Naive thymus-derived CD4-positive, alpha-beta T cell (primary cell): ENCODE measurements at regions of chr4 and their contacts with region 1.

Region 1: GRCh38 chr4:55948726-55949474 is at the start of gene CEP135:
- DNase-seq: peak; percentile 84 to 94 (median 90)
- ATAC-seq: peak; percentile 88
- H3K4me3 ChIP-seq: peak within 1 kb of the TSS; percentile 88
- H3K4me3 Mint-ChIP-seq: peak within 1 kb of the TSS; percentile 86 to 96 (median 92)
- H3K27ac ChIP-seq: peak within 1 kb of the TSS; percentile 71
- H3K27ac Mint-ChIP-seq: peak within 1 kb of the TSS; percentile 90 to 98 (median 94)
- H3K4me1 ChIP-seq: peaks cover 14 to 15% of the 10 kb centered on the region in 2 donors
- H3K4me1 Mint-ChIP-seq: peaks cover 30 to 69% (median 51%) of the 10 kb centered on the region in 7 donors
- H3K27me3 ChIP-seq: no peaks in the 10 kb centered on the region
- H3K27me3 Mint-ChIP-seq: no peaks in the 10 kb centered on the region
- total RNA-seq, gene CEP135: 20.6 to 38.8 (median 24.6) TPM

Region 2: DNA sequence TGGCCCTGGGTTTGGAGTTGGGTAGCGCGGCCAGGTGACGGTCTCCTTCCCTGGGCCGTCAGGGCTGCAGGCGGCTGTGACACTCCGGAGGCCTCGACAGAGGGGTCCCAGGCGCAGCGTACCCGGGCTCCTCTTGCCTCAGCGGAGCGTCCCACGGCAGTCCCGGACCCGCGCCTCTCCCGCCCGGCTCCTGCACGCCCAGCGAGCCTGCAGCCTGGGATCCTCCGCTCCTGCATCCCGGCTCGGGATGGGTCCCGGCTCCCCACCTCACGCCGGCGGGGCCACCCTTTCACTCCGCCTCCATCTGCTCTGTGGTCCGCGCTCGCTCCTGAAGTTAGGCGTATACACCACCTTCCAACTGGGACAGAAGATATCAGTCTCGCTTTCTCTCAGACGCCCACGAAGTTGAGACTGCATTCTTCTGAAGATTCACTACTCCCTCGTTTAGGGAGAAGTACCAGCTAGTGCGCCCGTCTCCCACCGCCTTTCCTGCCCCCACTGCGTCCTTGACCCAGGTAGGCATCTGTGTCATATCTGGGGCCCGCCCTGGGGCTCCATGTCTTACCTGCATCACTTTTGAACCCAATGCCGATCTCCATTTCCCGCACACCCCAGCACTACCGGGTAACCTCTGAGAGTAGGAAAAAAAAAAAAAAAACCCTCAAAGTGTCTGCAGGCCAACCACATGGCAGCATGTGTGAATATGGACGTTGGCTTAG is 791.2 kb before region 1 on chr4:
- CTCF ChIA-PET with region 1: no interaction called
- POLR2A ChIA-PET with region 1: no interaction called
- intact Hi-C with region 1: no loop called
- DNase-seq: no peak
- ATAC-seq: no peak
- H3K4me3 ChIP-seq: no peak overlapping the region
- H3K4me3 Mint-ChIP-seq: peak overlapping the region in 3 of 10 donors; percentile 14 to 49 (median 39)
- H3K27ac ChIP-seq: no peak overlapping the region
- H3K27ac Mint-ChIP-seq: no peak overlapping the region
- H3K4me1 ChIP-seq: no peaks in the 10 kb centered on the region
- H3K4me1 Mint-ChIP-seq: peaks cover 0 to 4% (median 0%) of the 10 kb centered on the region in 7 donors
- H3K27me3 ChIP-seq: peaks cover 0 to 3% of the 10 kb centered on the region in 2 donors
- H3K27me3 Mint-ChIP-seq: peaks cover 25 to 58% (median 45%) of the 10 kb centered on the region in 5 donors

Region 3: GRCh38 chr4:55345980-55346850 is 602.7 kb before region 1 on chr4 and contains the start of gene SRD5A3:
- CTCF ChIA-PET with region 1: interaction called, 3 read pairs
- POLR2A ChIA-PET with region 1: no interaction called
- intact Hi-C with region 1: loop called (anchors 2 to 5 kb)
- DNase-seq: peak; percentile 53 to 92 (median 72)
- ATAC-seq: peak; percentile 97
- H3K4me3 ChIP-seq: peak within 1 kb of the TSS; percentile 79
- H3K4me3 Mint-ChIP-seq: peak within 1 kb of the TSS; percentile 83 to 94 (median 90)
- H3K27ac ChIP-seq: peak within 1 kb of the TSS; percentile 69
- H3K27ac Mint-ChIP-seq: peak within 1 kb of the TSS; percentile 70 to 91 (median 87)
- H3K4me1 ChIP-seq: peaks cover 6 to 8% of the 10 kb centered on the region in 2 donors
- H3K4me1 Mint-ChIP-seq: peaks cover 8 to 23% (median 19%) of the 10 kb centered on the region in 7 donors
- H3K27me3 ChIP-seq: no peaks in the 10 kb centered on the region
- H3K27me3 Mint-ChIP-seq: no peaks in the 10 kb centered on the region
- total RNA-seq, gene SRD5A3: 1.9 to 8.5 (median 4.5) TPM

Region 4: DNA sequence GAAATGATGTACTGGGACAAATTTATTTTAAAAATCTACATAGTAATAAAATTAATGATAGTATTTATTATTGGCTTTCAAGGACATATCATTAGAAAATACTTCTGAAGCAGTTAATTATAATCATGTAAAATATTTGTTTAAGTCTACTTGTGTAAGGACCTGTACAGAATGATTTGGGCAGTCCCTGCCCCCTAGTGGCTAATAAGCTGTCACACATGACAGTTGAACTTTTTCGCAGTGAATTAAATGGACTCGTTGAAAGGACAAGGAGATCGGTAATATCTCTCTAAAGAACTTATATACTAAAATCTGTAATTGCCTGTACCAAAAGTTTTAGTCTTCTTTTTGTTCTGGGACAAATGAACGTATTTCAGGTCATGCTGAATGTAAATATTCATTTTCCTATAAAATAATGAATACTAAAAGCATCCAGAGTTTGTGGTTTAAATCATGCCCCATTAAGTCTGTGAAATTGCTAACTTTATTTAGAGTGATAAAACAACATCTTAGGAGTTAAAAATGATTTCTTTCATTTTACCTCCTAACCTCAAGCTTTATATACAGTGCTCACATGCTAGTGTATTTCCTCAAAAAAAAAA is 81.8 kb before region 1 on chr4:
- CTCF ChIA-PET with region 1: interaction called, 3 read pairs
- POLR2A ChIA-PET with region 1: interaction called, 7 read pairs
- intact Hi-C with region 1: loop called in 1 of 2 experiments (anchors 5 kb)
- DNase-seq: peak in 7 of 9 donors; percentile 21 to 56 (median 50)
- ATAC-seq: peak; percentile 88
- H3K4me3 ChIP-seq: no peak overlapping the region
- H3K4me3 Mint-ChIP-seq: no peak overlapping the region
- H3K27ac ChIP-seq: no peak overlapping the region
- H3K27ac Mint-ChIP-seq: no peak overlapping the region
- H3K4me1 ChIP-seq: no peaks in the 10 kb centered on the region
- H3K4me1 Mint-ChIP-seq: peaks cover 6 to 20% (median 15%) of the 10 kb centered on the region in 7 donors
- H3K27me3 ChIP-seq: no peaks in the 10 kb centered on the region
- H3K27me3 Mint-ChIP-seq: no peaks in the 10 kb centered on the region

Region 5: DNA sequence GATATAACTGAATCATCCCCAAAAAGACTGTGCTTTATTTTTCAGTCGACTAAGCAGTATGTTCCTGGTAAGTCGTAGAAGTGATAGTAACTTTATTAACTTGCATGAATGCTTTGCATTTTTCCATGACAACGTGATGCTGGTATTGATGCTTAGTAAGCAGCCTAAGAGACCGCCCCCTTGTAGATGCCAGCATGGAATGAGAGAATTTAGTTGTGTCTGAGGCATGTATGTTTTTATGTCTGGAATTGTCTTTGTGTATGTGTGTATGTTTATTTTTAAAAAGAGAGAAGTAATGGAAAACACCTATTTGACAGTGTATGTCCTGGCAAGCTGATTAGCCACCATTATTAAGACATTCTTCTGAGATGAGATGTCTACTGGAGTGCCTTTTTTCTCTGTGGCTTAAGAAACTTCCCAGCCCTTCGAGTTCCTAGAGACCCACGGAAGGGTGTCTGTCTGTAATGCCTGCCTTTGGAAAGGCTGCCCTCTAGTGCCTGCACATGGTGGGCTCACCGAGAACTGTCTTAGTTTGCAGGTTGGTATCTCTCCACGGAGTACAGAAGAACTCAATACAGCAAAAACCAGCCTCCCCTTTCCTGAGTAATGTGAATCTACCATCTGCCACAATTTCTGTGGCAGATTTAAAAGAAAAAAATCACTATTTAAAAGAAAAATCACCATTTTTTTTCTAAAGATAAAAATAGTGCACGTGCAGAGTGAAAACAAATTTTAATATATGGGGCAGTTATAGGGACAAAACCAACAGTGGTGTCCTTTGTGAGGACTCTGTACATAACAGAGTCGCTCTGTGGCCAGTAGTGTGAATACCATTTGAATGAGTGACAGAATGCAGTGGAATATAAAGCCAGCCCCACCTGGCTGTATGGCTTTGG is 352.5 kb after region 1 on chr4:
- CTCF ChIA-PET with region 1: no interaction called
- POLR2A ChIA-PET with region 1: no interaction called
- intact Hi-C with region 1: loop called (anchors 1 kb)
- DNase-seq: peak; percentile 27 to 71 (median 67)
- ATAC-seq: peak; percentile 92
- H3K4me3 ChIP-seq: peak overlapping the region; percentile 13
- H3K4me3 Mint-ChIP-seq: peak overlapping the region; percentile 46 to 79 (median 64)
- H3K27ac ChIP-seq: no peak overlapping the region
- H3K27ac Mint-ChIP-seq: peak overlapping the region in 3 of 9 donors; percentile 4 to 41 (median 32)
- H3K4me1 ChIP-seq: no peaks in the 10 kb centered on the region
- H3K4me1 Mint-ChIP-seq: peaks cover 4 to 21% (median 16%) of the 10 kb centered on the region in 7 donors
- H3K27me3 ChIP-seq: no peaks in the 10 kb centered on the region
- H3K27me3 Mint-ChIP-seq: peaks cover 0 to 7% (median 0%) of the 10 kb centered on the region in 5 donors

Region 6: GRCh38 chr4:56530269-56531148 is 581.6 kb after region 1 on chr4:
- CTCF ChIA-PET with region 1: no interaction called
- POLR2A ChIA-PET with region 1: no interaction called
- intact Hi-C with region 1: loop called in 1 of 2 experiments (anchors 2 kb)
- DNase-seq: peak; percentile 53 to 75 (median 59)
- ATAC-seq: peak; percentile 99
- H3K4me3 ChIP-seq: peak overlapping the region; percentile 91
- H3K4me3 Mint-ChIP-seq: peak overlapping the region in 1 of 10 donors; percentile 70
- H3K27ac ChIP-seq: peak overlapping the region; percentile 44
- H3K27ac Mint-ChIP-seq: peak overlapping the region in 3 of 9 donors; percentile 26 to 55 (median 38)
- H3K4me1 ChIP-seq: peaks cover 0 to 4% of the 10 kb centered on the region in 2 donors
- H3K4me1 Mint-ChIP-seq: peaks cover 0 to 2% (median 0%) of the 10 kb centered on the region in 7 donors
- H3K27me3 ChIP-seq: peaks cover 0 to 4% of the 10 kb centered on the region in 2 donors
- H3K27me3 Mint-ChIP-seq: peaks cover 0 to 22% (median 7%) of the 10 kb centered on the region in 5 donors

Region 7: DNA sequence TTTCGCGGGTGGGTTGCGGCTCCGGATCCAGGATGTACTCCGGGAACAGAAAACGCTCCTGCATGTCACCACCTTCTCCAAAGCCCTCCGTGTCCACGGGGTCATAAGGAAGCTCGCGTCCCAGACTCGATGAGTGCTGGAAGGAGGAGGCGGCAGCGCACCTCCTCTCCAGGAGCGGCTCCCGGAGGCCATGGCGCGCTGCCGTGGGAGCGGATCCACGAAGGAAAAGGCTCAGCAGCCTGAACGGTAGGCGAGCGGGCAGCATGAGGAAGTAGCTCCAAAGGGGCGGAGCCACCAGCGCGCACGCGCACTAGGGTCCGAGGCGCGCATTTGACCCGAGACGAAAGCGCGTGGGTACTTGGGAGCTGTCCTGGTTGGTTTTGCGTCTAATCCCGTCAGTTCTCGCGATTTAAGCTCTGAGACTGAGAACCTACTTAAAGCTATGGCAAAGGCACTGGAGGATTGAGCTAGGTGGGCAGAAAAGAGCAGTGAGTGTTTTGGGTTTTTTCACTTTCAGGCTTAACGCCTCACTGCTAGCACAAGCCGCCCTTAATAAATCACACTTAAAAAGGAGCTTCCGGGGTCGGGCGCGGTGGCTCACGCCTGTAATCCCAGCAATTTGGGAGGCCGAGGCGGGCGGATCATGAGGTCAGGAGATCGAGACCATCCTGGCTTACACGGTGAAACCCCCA is 1028.6 kb after region 1 on chr4 and contains the start of gene NOA1:
- CTCF ChIA-PET with region 1: interaction called, 5 read pairs
- POLR2A ChIA-PET with region 1: interaction called, 6 read pairs
- intact Hi-C with region 1: loop called (anchors 1 kb)
- DNase-seq: peak; percentile 98 to 99 (median 99)
- ATAC-seq: peak; percentile 86
- H3K4me3 ChIP-seq: peak within 1 kb of the TSS; percentile 80
- H3K4me3 Mint-ChIP-seq: peak within 1 kb of the TSS; percentile 92 to 100 (median 98)
- H3K27ac ChIP-seq: peak within 1 kb of the TSS; percentile 82
- H3K27ac Mint-ChIP-seq: peak within 1 kb of the TSS; percentile 94 to 100 (median 98)
- H3K4me1 ChIP-seq: peaks cover 36 to 38% of the 10 kb centered on the region in 2 donors
- H3K4me1 Mint-ChIP-seq: peaks cover 41 to 70% (median 52%) of the 10 kb centered on the region in 7 donors
- H3K27me3 ChIP-seq: no peaks in the 10 kb centered on the region
- H3K27me3 Mint-ChIP-seq: peaks cover 0 to 2% (median 0%) of the 10 kb centered on the region in 5 donors
- total RNA-seq, gene NOA1: 13.6 to 23.0 (median 20.9) TPM